AG04449 (cell line): ENCODE measurements at regions of chr7 and their contacts with region 1.

Region 1: DNA sequence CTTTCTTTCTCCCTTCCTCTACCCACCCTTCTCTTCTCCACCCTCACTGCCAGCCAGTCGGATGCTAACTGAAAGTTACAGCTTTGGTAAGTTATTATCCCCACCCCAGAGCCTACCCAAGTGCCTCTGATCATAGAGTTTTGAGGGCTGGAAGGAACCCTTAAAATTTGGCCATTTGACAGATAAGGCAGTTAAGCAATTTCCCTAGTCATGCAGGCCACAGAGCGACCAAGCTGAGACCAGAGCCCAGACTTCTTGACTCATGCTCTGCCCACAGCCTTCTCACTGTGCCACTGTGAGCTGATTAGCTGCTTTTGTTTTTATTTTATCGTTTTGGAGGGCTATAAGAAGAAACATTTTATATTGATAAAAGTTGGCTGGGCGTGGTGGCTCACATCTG is 17.2 kb downstream of the SAP25 start:
- DNase-seq: no peak
- H3K4me3 ChIP-seq: no peak overlapping the region
- CTCF ChIP-seq: no peak

Region 2: DNA sequence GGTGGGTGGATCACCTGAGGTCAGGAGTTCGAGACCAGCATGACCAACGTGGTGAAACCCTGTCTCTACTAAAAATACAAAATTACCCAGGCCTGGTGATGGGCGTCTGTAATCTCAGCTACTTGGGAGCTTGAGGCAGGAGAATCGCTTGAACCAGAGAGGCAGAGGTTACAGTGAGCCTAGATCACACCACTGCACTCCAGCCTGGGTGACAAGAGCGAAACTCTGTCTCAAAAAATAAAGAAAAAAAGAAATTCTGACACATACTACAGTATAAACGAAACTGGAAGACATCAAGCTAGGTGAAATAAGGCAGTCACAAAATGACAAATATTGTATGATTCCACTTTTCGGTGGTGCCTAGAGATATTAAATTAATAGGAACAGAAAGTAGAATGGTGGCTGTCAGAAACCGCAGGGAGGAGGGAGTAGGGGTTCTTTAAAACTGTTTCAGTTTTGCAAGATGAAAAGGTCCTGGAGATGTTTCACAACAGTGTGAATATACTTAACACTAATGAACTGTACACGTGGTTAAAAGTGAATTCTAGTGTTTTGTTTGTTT is 160.0 kb before region 1 on chr7:
- CTCF ChIA-PET with region 1: no interaction called
- POLR2A ChIA-PET with region 1: no interaction called
- DNase-seq: no peak
- H3K4me3 ChIP-seq: no peak overlapping the region
- CTCF ChIP-seq: no peak

Region 3: DNA sequence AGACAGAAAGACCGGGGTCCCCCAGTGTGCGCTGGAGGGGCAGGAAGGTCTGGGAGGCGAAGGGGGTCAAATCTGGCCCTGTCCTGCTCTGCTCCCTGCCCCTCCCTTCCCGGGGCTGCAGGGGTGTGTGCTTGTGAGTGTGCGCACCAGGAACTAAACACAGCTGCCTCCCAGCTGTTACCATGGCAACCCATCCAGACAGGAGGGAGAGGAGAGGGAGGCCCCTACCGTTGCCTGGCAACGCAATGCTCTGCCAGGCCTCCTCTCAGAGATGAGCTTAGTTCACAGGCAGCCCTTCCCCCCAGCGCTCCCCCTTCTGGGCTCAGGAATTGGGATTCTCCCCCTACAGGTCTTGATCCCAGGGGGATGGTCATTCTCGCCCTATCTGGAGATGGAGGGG is 66.7 kb before region 1 on chr7:
- CTCF ChIA-PET with region 1: interaction called, 11 read pairs
- POLR2A ChIA-PET with region 1: no interaction called
- DNase-seq: peak; percentile 51
- H3K4me3 ChIP-seq: no peak overlapping the region
- CTCF ChIP-seq: no peak

Region 4: GRCh38 chr7:100568896-100569844 is 12.6 kb after region 1 on chr7:
- CTCF ChIA-PET with region 1: interaction called, 396 read pairs
- POLR2A ChIA-PET with region 1: no interaction called
- DNase-seq: no peak
- H3K4me3 ChIP-seq: peak overlapping the region; percentile 34
- CTCF ChIP-seq: peak; percentile 39